Right ventricle myocardium inferior (tissue), 1 donor: ENCODE measurements at regions of chr9 and their contacts with region 1.

Region 1: GRCh38 chr9:16191691-16192402 is 639.0 kb downstream of the CCDC171 start:
- DNase-seq: peak; percentile 88
- ATAC-seq: peak; percentile 94

Region 2: GRCh38 chr9:16100537-16101091 is 91.2 kb before region 1 on chr9:
- intact Hi-C with region 1: no loop called
- DNase-seq: peak; percentile 86
- ATAC-seq: peak; percentile 98

Region 3: GRCh38 chr9:16626577-16627131 is 434.8 kb after region 1 on chr9:
- intact Hi-C with region 1: loop called (anchors 10 kb)
- DNase-seq: no peak
- ATAC-seq: peak; percentile 85